ENCODE measurements at regions of chr22 and their contacts with region 1.

Region 1: DNA sequence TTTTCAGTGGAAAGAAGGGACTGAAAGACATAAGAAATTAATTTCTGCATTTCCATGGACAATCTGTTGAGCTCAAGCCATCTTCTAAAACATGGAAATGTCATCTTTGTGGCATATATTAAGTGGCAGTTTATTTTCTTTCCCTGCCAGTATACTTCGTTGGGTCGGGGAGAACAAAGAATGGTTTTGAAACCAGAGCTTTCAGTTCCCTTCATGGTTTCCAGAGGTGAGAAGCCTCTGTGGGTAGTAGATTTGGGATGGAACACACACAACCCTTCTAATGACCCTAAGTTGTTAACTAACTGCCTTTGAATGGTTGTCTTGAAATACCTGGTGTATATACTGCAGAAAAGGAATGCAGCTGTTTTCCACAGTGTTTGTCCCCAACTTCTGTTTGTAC is 17.6 kb upstream of the GAS2L1 start:
- DNase-seq: no peak
- H3K4me3 ChIP-seq: no peak overlapping the region
- CTCF ChIP-seq: no peak

Region 2: GRCh38 chr22:29267858-29268417 is 20.9 kb before region 1 on chr22 and contains the starts of genes EWSR1 and RHBDD3:
- CTCF ChIA-PET with region 1: interaction called, 26 read pairs
- POLR2A ChIA-PET with region 1: interaction called, 3 read pairs
- DNase-seq: peak; percentile 84
- H3K4me3 ChIP-seq: peak within 1 kb of the TSS; percentile 89
- CTCF ChIP-seq: no peak

Measured in AG04449 (cell line).